ENCODE measurements at regions of chr15 and their contacts with region 1.

Region 1: DNA sequence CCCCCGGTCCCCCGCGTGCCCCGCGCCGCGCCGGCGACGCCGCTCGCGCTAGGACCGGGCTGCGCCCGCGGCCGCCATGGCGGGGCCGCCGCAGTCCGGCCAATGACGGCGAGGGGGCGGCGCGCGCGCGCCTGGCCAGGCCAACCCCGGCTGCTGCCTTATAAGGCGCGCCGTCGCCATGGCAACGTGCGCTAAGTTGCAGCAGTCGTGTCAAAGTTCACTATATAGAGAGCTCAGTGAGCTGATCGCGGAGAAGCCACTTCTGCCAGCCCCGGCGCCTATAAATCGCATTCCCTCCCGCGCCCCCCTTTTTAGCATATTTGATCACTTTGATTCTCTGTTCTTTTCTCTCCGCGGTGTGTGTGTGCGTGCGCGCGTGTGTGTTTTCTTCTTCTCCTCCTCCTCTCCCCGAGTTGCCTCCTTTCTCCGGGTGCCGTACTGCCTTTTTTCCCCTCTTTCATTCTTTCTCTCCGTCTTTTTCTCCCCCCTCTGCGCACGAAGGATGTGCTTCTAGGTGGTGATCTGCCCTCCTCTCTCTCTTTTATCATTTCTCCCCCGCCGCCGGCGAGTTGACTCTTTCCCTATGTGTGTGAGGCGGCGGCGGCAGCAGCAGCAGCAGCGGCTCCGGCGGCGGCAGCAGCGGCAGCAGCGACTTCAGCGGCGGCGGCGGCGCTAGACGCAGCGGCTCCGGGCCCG is at the start of gene NR2F2:
- DNase-seq: peak; percentile 97
- H3K4me3 Mint-ChIP-seq: peak within 1 kb of the TSS; percentile 84
- H3K27ac Mint-ChIP-seq: peak within 1 kb of the TSS; percentile 98
- H3K4me1 Mint-ChIP-seq: peaks cover 18% of the 10 kb centered on the region
- H3K27me3 Mint-ChIP-seq: no peaks in the 10 kb centered on the region
- CTCF ChIP-seq: no peak
- total RNA-seq, gene NR2F2: 9.6 and 10.9 TPM in 2 replicates

Region 2: GRCh38 chr15:94670438-94671034 is 1660.1 kb before region 1 on chr15:
- CTCF ChIA-PET with region 1: interaction called, 6 read pairs
- POLR2A ChIA-PET with region 1: interaction called, 4 read pairs
- intact Hi-C with region 1: loop called (anchors 5 kb)
- DNase-seq: peak; percentile 64
- H3K4me3 Mint-ChIP-seq: no peak overlapping the region
- H3K27ac Mint-ChIP-seq: no peak overlapping the region
- H3K4me1 Mint-ChIP-seq: peaks cover 13% of the 10 kb centered on the region
- H3K27me3 Mint-ChIP-seq: no peaks in the 10 kb centered on the region
- CTCF ChIP-seq: peak; percentile 66

Region 3: GRCh38 chr15:95557226-95558046 is 773.2 kb before region 1 on chr15:
- CTCF ChIA-PET with region 1: interaction called, 5 read pairs
- POLR2A ChIA-PET with region 1: interaction called, 3 read pairs
- intact Hi-C with region 1: loop called (anchors 5 kb)
- DNase-seq: peak; percentile 92
- H3K4me3 Mint-ChIP-seq: no peak overlapping the region
- H3K27ac Mint-ChIP-seq: peak overlapping the region; percentile 90
- H3K4me1 Mint-ChIP-seq: peaks cover 37% of the 10 kb centered on the region
- H3K27me3 Mint-ChIP-seq: no peaks in the 10 kb centered on the region
- CTCF ChIP-seq: no peak

Region 4: GRCh38 chr15:96122077-96122681 is 208.4 kb before region 1 on chr15:
- CTCF ChIA-PET with region 1: interaction called, 4 read pairs
- POLR2A ChIA-PET with region 1: interaction called, 3 read pairs
- intact Hi-C with region 1: loop called (anchors 10 kb)
- DNase-seq: peak; percentile 2
- H3K4me3 Mint-ChIP-seq: no peak overlapping the region
- H3K27ac Mint-ChIP-seq: no peak overlapping the region
- H3K4me1 Mint-ChIP-seq: peaks cover 15% of the 10 kb centered on the region
- H3K27me3 Mint-ChIP-seq: no peaks in the 10 kb centered on the region
- CTCF ChIP-seq: no peak

Region 5: GRCh38 chr15:96345560-96346399 is 15.2 kb after region 1 on chr15:
- CTCF ChIA-PET with region 1: interaction called, 20 read pairs
- POLR2A ChIA-PET with region 1: interaction called, 156 read pairs
- intact Hi-C with region 1: loop called (anchors 1 kb)
- DNase-seq: peak; percentile 23
- H3K4me3 Mint-ChIP-seq: no peak overlapping the region
- H3K27ac Mint-ChIP-seq: no peak overlapping the region
- H3K4me1 Mint-ChIP-seq: peaks cover 9% of the 10 kb centered on the region
- H3K27me3 Mint-ChIP-seq: no peaks in the 10 kb centered on the region
- CTCF ChIP-seq: peak; percentile 48

Region 6: DNA sequence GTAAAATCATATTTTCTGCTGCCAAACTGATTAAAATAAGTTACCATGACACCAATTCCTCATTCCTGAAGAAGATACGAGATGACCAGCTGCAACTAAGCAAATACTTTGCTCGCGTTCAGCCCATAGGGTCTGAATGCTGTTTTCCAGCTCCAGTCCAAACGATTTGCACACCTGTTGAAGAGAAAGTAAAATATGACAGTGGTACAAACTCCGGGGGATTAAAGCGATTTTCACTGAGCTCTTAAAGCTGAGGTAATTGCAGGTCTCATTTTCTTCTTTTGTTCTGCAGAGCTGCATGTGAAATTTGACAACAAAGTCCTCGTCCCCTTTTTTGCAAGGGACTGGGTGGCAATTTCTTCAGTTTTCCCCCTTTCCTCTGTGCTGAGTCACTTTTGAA is 118.3 kb after region 1 on chr15:
- CTCF ChIA-PET with region 1: no interaction called
- POLR2A ChIA-PET with region 1: no interaction called
- intact Hi-C with region 1: no loop called
- DNase-seq: no peak
- H3K4me3 Mint-ChIP-seq: no peak overlapping the region
- H3K27ac Mint-ChIP-seq: no peak overlapping the region
- H3K4me1 Mint-ChIP-seq: no peaks in the 10 kb centered on the region
- H3K27me3 Mint-ChIP-seq: peaks cover 97% of the 10 kb centered on the region
- CTCF ChIP-seq: no peak

Region 7: DNA sequence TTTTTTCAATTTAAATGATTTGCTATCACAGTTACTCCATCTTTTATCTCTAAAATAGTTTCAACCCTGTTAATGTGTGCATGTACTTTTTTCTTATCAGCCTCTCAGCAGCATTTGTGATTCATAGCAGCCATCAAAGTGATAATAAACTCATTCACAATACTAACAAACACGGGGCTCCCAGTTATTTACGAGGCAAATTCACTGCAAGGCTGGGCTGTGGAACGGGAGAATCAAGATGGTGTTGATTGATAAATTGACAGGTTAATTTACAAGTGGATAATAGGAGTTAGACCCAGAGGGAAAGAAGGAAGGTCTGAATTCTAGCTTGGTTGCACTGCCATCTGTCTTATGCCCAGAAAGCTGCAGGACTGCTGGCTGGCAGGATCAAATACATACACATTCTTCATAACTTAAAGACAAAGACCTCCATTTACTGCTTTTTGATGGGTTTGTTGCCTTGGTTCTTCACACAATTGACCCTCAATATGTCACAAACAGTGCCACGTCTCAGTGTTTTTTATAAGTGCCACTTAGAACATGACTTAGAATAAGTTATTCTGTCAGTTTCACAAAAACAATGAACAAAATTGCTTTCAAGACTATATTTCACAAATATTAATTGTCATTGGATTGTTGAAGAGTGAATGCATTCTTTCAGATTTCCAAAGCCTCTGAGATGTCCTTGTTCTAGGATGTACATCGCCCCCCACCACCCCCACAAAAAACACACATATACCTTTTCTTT is 562.7 kb after region 1 on chr15:
- CTCF ChIA-PET with region 1: interaction called, 5 read pairs
- POLR2A ChIA-PET with region 1: interaction called, 5 read pairs
- intact Hi-C with region 1: loop called (anchors 1 kb)
- DNase-seq: peak; percentile 49
- H3K4me3 Mint-ChIP-seq: no peak overlapping the region
- H3K27ac Mint-ChIP-seq: no peak overlapping the region
- H3K4me1 Mint-ChIP-seq: peaks cover 9% of the 10 kb centered on the region
- H3K27me3 Mint-ChIP-seq: no peaks in the 10 kb centered on the region
- CTCF ChIP-seq: peak; percentile 62

Measured in MCF 10A (cell line).